HepG2 (cell line): ENCODE measurements at regions of chr12 and their contacts with region 1.

Region 1: DNA sequence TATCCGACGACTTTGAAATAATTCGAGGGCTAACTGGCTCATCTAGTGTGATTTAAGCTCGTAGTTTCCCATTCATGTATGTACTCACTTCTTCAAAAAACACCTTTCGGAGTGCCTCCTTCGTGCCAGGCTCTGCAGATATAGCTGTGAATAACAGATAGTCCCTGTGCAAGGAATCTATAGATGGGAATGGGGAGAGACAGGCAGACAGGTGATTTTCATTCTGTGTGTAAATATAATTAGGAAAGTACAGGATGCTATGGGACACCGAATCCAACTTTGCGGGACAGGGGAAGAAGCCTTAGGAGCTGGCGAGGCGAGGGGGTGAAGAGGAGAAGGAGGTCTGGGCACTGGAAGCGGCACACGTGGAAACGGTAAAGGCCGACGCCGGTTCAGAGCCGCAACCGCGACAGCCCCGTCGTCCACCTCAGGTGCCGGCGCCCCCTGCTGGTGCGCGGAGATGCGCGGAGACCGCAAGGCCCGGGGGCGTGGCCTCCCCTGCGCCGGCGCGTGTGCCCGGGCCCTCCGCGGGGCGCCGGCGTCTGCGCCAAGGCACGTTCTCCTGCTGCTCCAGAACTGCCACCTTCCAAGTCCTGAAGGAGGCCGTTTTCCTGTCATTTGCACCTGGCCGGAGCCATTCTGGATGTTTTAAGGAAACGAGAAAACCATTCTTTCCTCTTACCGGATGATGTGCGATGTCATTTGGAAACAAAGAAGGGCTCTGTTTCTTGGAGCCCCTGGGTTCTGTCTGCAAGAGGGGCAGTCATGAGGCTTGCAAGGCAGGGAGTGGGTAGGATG is 18.0 kb upstream of the CACNA1C start:
- DNase-seq: peak; percentile 50
- ATAC-seq: peak; percentile 98
- H3K4me3 ChIP-seq: peak overlapping the region; percentile 6 to 65 (median 18)
- H3K27ac ChIP-seq: no peak overlapping the region
- H3K4me1 ChIP-seq: peaks cover 13% of the 10 kb centered on the region
- H3K27me3 ChIP-seq: peaks cover 3 to 61% of the 10 kb centered on the region in 2 experiments; a peak in 4 of 5 replicates
- CTCF ChIP-seq: peak; percentile 92
- EP300 ChIP-seq: no peak
- POLR2A ChIP-seq: no peak
- RAD21 ChIP-seq: peak; percentile 90

Region 2: DNA sequence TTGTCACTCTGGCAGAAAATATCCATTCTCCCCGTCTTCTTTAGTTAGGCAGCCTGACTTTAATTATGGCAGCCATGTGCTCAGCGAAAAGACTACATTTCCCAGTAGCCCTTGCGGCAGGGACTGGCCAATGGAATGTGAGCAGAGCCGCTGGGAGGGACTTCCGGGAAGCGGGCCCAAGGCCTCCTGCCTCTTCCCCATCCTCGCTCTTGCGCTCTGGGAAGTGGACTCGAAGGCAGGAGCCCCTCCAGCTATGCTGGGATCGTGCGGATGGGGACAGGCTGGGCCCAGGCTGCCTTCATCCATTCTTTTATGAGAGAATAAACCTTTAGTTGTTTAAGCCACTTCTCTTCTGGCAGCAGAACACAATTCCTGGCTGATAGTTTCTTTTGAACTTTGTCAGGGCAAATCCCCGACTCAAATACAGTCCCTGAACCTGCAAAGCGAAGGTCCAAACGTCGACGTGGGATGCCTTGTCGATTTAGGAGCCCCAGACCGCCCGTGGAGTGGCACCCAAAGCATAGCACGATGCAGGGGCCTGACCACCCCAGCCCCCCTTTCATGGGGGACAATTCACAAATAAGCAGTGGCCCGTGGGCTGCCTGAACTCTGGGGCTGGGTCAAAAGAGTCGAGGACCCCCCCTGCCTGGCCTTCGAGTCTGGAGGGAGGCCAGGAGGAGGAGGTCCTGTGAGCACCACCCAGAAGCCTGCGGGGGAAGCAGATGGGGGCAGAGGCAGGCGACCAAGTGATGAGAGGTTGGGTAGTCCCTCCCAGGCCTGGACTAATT is 230.1 kb before region 1 on chr12:
- CTCF ChIA-PET with region 1: no interaction called
- POLR2A ChIA-PET with region 1: no interaction called
- in situ Hi-C with region 1: loop called (anchors 10 kb)
- intact Hi-C with region 1: loop called (anchors 5 kb)
- DNase-seq: peak; percentile 69
- ATAC-seq: peak; percentile 78
- H3K4me3 ChIP-seq: no peak overlapping the region
- H3K27ac ChIP-seq: no peak overlapping the region
- H3K4me1 ChIP-seq: peaks cover 52% of the 10 kb centered on the region
- H3K27me3 ChIP-seq: no peaks in the 10 kb centered on the region
- CTCF ChIP-seq: no peak
- EP300 ChIP-seq: no peak
- POLR2A ChIP-seq: no peak
- RAD21 ChIP-seq: no peak